ENCODE measurements at regions of chr3 and their contacts with region 1.

Region 1: DNA sequence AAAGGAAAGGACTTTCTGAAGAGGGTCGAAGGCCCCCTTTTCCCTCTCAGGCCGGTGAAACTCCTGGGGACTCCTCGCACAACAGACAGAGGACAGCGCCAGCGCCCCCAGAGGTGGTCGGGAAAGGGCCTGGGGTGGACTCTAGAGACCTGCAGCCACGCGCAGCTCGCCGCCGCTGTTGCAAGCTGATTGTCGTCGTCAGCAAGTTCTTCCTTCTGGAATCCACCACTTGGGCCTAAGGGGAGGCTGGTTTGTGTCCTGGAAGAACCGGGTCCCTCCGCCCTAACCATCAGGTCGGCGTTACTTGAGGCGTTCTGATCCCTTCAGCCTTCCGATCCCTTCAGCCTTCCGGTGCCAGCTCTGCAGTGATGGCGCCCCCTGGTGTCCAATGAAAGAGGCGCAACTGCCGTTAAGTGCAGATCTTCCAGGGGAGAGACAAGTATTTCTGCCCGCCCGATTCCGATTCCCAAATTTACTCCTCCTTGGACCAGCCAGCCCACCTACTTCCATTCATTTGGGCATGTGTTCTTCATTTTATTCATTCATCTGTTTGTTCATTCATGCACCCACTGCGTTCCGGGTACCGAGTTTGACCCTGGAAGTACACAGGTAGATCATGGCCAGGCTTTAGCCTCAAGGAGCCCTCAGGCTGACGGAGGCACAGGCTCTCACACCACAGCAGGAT is 77.2 kb upstream of the SLC6A11 start:
- DNase-seq: peak; percentile 63 to 91
- H3K4me3 ChIP-seq: peak overlapping the region; percentile 26 to 63 (median 57); a peak in 7 of 8 replicates
- H3K27ac ChIP-seq: no peak overlapping the region
- H3K4me1 ChIP-seq: no peaks in the 10 kb centered on the region
- H3K27me3 ChIP-seq: peaks cover 0 to 6% (median 3%) of the 10 kb centered on the region in 4 experiments; a peak in 4 of 7 replicates
- CTCF ChIP-seq: peak; percentile 53 to 68 (median 64)
- EP300 ChIP-seq: no peak
- POLR2A ChIP-seq: no peak
- RAD21 ChIP-seq: peak; percentile 60 to 62

Region 2: GRCh38 chr3:10322352-10322710 is 416.5 kb before region 1 on chr3:
- CTCF ChIA-PET with region 1: interaction called, 12 read pairs
- POLR2A ChIA-PET with region 1: no interaction called
- DNase-seq: no peak
- H3K4me3 ChIP-seq: no peak overlapping the region
- H3K27ac ChIP-seq: no peak overlapping the region
- H3K4me1 ChIP-seq: peaks cover 0 to 4% (median 3%) of the 10 kb centered on the region in 4 experiments; a peak in 5 of 7 replicates
- H3K27me3 ChIP-seq: peaks cover 0 to 4% (median 0%) of the 10 kb centered on the region in 4 experiments; a peak in 2 of 7 replicates
- CTCF ChIP-seq: peak in 2 of 3 experiments; percentile 48 to 57; a peak in 3 of 4 replicates
- EP300 ChIP-seq: no peak
- POLR2A ChIP-seq: no peak
- RAD21 ChIP-seq: peak; percentile 49 to 57

Region 3: DNA sequence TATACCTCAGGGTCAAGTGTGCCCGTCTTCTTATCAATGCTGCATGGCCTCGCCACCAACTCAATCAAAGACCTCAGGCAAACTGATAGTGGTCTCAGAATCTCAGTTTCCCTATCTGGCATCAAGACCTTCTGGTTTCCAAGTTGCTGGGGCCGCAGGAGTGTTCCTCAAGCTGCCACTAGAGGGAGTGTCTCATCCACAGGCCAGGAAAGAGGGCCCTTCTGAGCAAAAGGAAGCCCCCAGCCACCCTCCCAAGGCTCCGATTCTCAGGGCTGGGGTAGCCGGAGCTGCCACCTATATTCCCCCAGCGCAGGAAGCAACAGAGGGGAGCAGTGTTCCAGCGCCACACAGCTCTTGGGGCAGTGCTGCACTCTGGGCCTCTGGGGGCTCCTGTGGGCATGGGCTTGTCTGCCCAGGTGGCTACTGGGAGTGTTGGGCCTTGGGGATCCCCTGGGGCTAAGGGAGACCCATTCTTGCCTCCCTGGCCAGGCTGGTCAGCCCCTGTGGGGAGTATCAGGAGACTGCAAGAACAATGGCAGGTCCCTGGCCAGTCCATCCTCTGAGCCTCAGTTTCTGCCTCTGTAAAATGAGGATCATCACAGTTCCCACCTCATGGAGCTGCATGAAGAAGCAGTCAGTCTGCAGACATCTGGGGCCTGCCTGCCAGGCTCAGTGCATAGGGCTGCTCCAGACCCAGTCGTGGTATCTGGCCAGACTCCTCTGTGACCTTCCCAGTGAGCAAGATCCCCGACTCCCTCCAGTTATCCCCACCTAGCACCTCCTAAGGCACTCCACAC is 394.5 kb before region 1 on chr3:
- CTCF ChIA-PET with region 1: interaction called, 12 read pairs
- POLR2A ChIA-PET with region 1: no interaction called
- DNase-seq: peak; percentile 33 to 85
- H3K4me3 ChIP-seq: no peak overlapping the region
- H3K27ac ChIP-seq: no peak overlapping the region
- H3K4me1 ChIP-seq: peaks cover 0 to 2% (median 0%) of the 10 kb centered on the region in 4 experiments; a peak in 1 of 7 replicates
- H3K27me3 ChIP-seq: no peaks in the 10 kb centered on the region
- CTCF ChIP-seq: peak in 2 of 3 experiments; percentile 87 to 90; a peak in 3 of 4 replicates
- EP300 ChIP-seq: no peak
- POLR2A ChIP-seq: no peak
- RAD21 ChIP-seq: peak; percentile 90 to 91

Region 4: DNA sequence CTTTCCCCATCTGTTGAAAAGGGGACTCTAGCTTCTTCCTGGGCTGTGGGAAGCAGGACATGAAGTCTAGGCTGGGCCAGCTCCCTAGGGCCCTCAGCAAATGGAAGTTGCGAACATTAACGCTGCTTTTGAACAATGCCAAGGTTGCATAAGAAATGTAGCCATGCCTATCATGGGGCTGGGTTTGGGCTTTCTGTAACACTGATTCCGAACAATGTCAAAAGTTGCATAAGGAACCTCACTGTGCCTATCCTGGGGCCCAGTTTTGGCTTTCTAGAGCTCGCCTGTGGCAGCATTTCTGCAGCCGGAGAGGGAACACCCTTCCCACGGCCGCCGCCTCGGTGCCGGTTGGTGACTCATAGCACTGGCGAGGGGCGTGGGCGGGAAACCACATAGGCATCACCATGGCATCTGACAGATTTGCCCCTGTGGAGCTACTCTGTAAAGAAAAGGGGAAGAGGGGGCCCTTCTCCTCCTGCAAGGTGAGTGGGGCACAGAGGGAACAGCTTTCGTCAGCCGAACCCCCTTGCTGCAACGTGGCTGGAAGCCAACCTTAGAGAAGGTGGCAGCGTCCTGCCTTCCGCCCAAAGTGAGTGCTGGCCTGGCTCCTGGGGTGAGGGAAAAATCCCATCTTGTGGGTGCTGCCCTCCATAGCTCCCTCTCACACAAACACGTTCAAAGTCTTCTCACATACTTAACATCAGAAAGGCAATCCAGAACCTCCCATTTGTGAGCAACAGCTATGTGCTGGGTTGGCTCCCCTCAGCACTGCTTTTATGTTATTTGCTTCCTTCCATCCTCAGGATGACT is 186.8 kb before region 1 on chr3:
- CTCF ChIA-PET with region 1: interaction called, 10 read pairs
- POLR2A ChIA-PET with region 1: no interaction called
- DNase-seq: peak in 1 of 2 experiments; percentile 36
- H3K4me3 ChIP-seq: no peak overlapping the region
- H3K27ac ChIP-seq: no peak overlapping the region
- H3K4me1 ChIP-seq: peaks cover 4 to 11% (median 7%) of the 10 kb centered on the region in 4 experiments; a peak in 5 of 7 replicates
- H3K27me3 ChIP-seq: no peaks in the 10 kb centered on the region
- CTCF ChIP-seq: no peak
- EP300 ChIP-seq: no peak
- POLR2A ChIP-seq: no peak
- RAD21 ChIP-seq: no peak

Region 5: GRCh38 chr3:10715886-10716285 is 22.9 kb before region 1 on chr3:
- CTCF ChIA-PET with region 1: interaction called, 12 read pairs
- POLR2A ChIA-PET with region 1: no interaction called
- DNase-seq: no peak
- H3K4me3 ChIP-seq: no peak overlapping the region
- H3K27ac ChIP-seq: no peak overlapping the region
- H3K4me1 ChIP-seq: no peaks in the 10 kb centered on the region
- H3K27me3 ChIP-seq: peaks cover 0 to 4% (median 3%) of the 10 kb centered on the region in 4 experiments; a peak in 3 of 7 replicates
- CTCF ChIP-seq: no peak
- EP300 ChIP-seq: no peak
- POLR2A ChIP-seq: no peak
- RAD21 ChIP-seq: no peak

Region 6: DNA sequence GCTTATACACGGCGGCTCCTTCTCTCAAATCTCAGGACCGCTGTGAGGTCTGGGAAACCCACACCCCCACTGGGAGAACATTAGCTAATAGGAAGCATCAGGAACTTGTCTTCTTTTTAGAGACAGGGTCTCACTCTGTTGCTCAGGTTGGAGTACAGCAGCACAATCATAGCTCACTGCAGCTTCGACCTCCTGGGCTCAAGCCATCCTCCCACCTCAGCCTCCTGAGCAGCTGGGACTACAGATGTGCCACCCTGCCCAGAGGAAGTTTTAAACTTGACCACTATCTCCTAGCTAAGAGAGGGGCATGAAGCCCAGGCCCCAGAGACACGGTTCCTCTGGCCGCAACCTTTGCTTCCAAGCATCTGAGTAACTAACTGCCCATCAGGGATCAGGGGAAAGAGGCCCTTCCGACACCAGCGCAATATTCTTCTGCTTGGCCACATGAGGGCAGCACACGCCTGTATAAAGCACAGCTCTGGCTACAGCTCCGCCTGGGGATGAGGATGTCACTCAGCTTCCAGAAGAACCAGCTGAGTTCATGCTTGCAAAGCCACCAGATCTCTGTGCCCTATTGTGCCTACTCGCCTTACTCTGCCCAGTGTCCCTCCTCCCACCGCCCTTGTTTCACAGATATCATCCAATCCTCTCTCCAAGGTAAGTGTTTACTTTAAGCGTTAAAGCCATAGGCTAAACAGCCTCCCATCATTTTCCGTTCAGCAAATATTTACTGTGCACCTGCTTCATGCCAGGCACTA is 19.7 kb after region 1 on chr3:
- CTCF ChIA-PET with region 1: interaction called, 67 read pairs
- POLR2A ChIA-PET with region 1: no interaction called
- DNase-seq: peak in 1 of 2 experiments; percentile 69
- H3K4me3 ChIP-seq: no peak overlapping the region
- H3K27ac ChIP-seq: no peak overlapping the region
- H3K4me1 ChIP-seq: peaks cover 0 to 5% (median 0%) of the 10 kb centered on the region in 4 experiments; a peak in 3 of 7 replicates
- H3K27me3 ChIP-seq: peaks cover 0 to 2% (median 0%) of the 10 kb centered on the region in 4 experiments; a peak in 2 of 7 replicates
- CTCF ChIP-seq: peak; percentile 85 to 98 (median 94)
- EP300 ChIP-seq: no peak
- POLR2A ChIP-seq: no peak
- RAD21 ChIP-seq: peak; percentile 96 to 99

Region 7: GRCh38 chr3:10822708-10823515 is 84.1 kb after region 1 on chr3:
- CTCF ChIA-PET with region 1: no interaction called
- POLR2A ChIA-PET with region 1: no interaction called
- DNase-seq: no peak
- H3K4me3 ChIP-seq: no peak overlapping the region
- H3K27ac ChIP-seq: no peak overlapping the region
- H3K4me1 ChIP-seq: no peaks in the 10 kb centered on the region
- H3K27me3 ChIP-seq: no peaks in the 10 kb centered on the region; a peak in 1 of 7 replicates
- CTCF ChIP-seq: no peak
- EP300 ChIP-seq: no peak
- POLR2A ChIP-seq: no peak
- RAD21 ChIP-seq: no peak

Measured in H1 (cell line).